ENCODE measurements at regions of chr17 and their contacts with region 1.

Region 1: GRCh38 chr17:6913608-6914443 is 82.0 kb upstream of the ALOX12 start:
- DNase-seq: peak; percentile 41 to 82 (median 68)
- ATAC-seq: peak; percentile 74 to 84 (median 77)
- H3K4me3 ChIP-seq: peak overlapping the region; percentile 12 to 45
- H3K4me3 Mint-ChIP-seq: peak overlapping the region; percentile 78 to 84 (median 83)
- H3K27ac ChIP-seq: no peak overlapping the region
- H3K27ac Mint-ChIP-seq: peak overlapping the region; percentile 6 to 67
- H3K4me1 ChIP-seq: peaks cover 0 to 14% of the 10 kb centered on the region in 2 experiments
- H3K4me1 Mint-ChIP-seq: peaks cover 12 to 25% (median 15%) of the 10 kb centered on the region in 3 donors
- H3K27me3 ChIP-seq: peaks cover 0 to 16% of the 10 kb centered on the region in 2 experiments
- H3K27me3 Mint-ChIP-seq: peaks cover 7 to 13% of the 10 kb centered on the region in 2 donors

Region 2: GRCh38 chr17:5747271-5747670 is 1166.6 kb before region 1 on chr17:
- CTCF ChIA-PET with region 1: no interaction called
- POLR2A ChIA-PET with region 1: no interaction called
- DNase-seq: no peak
- ATAC-seq: no peak
- H3K4me3 ChIP-seq: no peak overlapping the region
- H3K4me3 Mint-ChIP-seq: no peak overlapping the region
- H3K27ac ChIP-seq: no peak overlapping the region
- H3K27ac Mint-ChIP-seq: no peak overlapping the region
- H3K4me1 ChIP-seq: no peaks in the 10 kb centered on the region
- H3K4me1 Mint-ChIP-seq: no peaks in the 10 kb centered on the region
- H3K27me3 ChIP-seq: peaks cover 0 to 13% of the 10 kb centered on the region in 2 experiments
- H3K27me3 Mint-ChIP-seq: peaks cover 10 to 17% of the 10 kb centered on the region in 2 donors

Region 3: DNA sequence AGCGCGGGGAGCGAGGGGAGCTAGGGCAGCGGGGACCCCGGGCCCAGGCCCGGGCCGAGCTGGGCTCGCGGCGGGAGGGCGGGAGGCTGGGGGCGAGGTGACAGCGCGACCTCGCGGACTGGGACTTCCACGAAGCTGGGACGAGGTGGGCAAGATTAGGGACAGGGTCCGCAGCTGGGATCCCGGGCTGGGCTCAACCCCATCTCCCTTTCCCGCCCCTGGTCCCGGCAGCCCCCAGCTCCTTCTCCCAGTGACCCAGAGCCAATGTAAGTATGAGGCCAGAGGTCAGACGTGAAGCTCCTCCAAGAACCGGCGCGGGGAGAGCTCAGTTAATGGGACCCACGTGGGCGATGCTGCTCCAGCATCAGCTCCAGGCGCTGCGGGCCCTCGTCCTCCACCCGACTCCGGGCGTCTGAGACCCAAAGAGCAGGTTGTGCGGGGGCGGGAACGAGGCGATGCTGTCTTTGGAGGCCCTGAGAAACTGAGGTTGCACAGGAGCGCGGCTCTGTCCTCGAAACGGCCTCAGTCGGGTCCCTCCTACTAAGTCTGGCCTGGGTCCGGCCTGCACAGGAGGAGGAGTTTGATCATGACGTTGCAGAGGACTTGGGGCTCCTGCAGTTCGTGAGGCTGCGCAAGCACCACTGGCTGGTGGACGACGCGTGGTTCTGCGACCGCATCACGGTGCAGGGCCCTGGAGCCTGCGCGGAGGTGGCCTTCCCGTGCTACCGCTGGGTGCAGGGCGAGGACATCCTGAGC is 82.6 kb after region 1 on chr17:
- CTCF ChIA-PET with region 1: interaction called in 1 of 2 experiments, 11 read pairs
- POLR2A ChIA-PET with region 1: no interaction called
- DNase-seq: no peak
- ATAC-seq: no peak
- H3K4me3 ChIP-seq: no peak overlapping the region
- H3K4me3 Mint-ChIP-seq: no peak overlapping the region
- H3K27ac ChIP-seq: no peak overlapping the region
- H3K27ac Mint-ChIP-seq: no peak overlapping the region
- H3K4me1 ChIP-seq: no peaks in the 10 kb centered on the region
- H3K4me1 Mint-ChIP-seq: peaks cover 2 to 3% (median 3%) of the 10 kb centered on the region in 3 donors
- H3K27me3 ChIP-seq: no peaks in the 10 kb centered on the region
- H3K27me3 Mint-ChIP-seq: no peaks in the 10 kb centered on the region

Region 4: GRCh38 chr17:7021993-7022778 is 108.4 kb after region 1 on chr17:
- CTCF ChIA-PET with region 1: interaction called, 11 to 14 read pairs
- POLR2A ChIA-PET with region 1: no interaction called
- DNase-seq: peak in 34 of 35 experiments; percentile 45 to 88 (median 65)
- ATAC-seq: peak; percentile 57 to 85 (median 80)
- H3K4me3 ChIP-seq: peak overlapping the region; percentile 35 to 43
- H3K4me3 Mint-ChIP-seq: peak overlapping the region; percentile 21 to 83 (median 49)
- H3K27ac ChIP-seq: peak overlapping the region; percentile 19
- H3K27ac Mint-ChIP-seq: peak overlapping the region in 1 of 2 donors; percentile 24
- H3K4me1 ChIP-seq: peaks cover 10 to 45% of the 10 kb centered on the region in 2 experiments
- H3K4me1 Mint-ChIP-seq: peaks cover 38 to 50% (median 45%) of the 10 kb centered on the region in 3 donors
- H3K27me3 ChIP-seq: peaks cover 0 to 18% of the 10 kb centered on the region in 2 experiments
- H3K27me3 Mint-ChIP-seq: no peaks in the 10 kb centered on the region

Measured in T-cell (primary cell).